Endothelial cell of umbilical vein (primary cell): ENCODE measurements at regions of chr2 and their contacts with region 1.

Region 1: DNA sequence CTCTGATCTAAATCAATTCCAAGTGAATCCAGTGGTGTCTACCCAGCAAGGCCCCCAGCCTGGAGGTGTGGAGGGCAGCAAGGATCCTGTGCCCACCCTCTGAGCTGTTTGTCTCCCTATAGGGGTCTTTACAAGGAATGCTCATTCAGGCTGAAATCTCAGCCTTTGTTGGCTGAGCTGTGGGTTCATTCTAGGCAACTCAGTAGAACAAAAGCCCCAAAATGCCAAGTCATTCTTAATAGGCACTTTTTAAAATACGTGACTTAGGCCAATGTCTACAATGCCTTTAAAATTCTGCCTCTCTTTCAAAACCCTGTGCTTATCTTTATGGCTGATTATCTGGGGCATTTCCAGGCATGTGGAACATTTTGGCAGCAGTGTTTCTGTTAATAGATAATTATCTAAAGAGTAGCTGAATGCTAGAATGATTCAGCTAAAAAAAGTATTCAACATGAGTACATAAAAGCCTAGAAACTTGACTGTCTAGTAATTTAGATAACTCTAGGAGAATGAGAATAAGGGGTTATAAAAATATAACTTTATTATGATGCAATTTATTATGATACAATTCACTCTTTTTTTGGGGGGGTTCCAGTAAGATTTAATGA is 7.4 kb downstream of the UGT1A6 start:
- DNase-seq: peak; percentile 94
- H3K4me3 ChIP-seq: no peak overlapping the region
- H3K27ac ChIP-seq: peak overlapping the region; percentile 95
- H3K4me1 ChIP-seq: peaks cover 4% of the 10 kb centered on the region
- H3K27me3 ChIP-seq: no peaks in the 10 kb centered on the region
- CTCF ChIP-seq: no peak
- POLR2A ChIP-seq: no peak

Region 2: GRCh38 chr2:233593201-233593600 is 106.9 kb before region 1 on chr2:
- CTCF ChIA-PET with region 1: no interaction called
- POLR2A ChIA-PET with region 1: no interaction called
- dilution Hi-C with region 1: no loop called
- intact Hi-C with region 1: no loop called
- DNase-seq: no peak
- H3K4me3 ChIP-seq: no peak overlapping the region
- H3K27ac ChIP-seq: no peak overlapping the region
- H3K4me1 ChIP-seq: no peaks in the 10 kb centered on the region
- H3K27me3 ChIP-seq: no peaks in the 10 kb centered on the region
- CTCF ChIP-seq: no peak
- POLR2A ChIP-seq: no peak

Region 3: GRCh38 chr2:233674995-233675394 is 25.1 kb before region 1 on chr2:
- CTCF ChIA-PET with region 1: no interaction called
- POLR2A ChIA-PET with region 1: no interaction called
- dilution Hi-C with region 1: no loop called
- intact Hi-C with region 1: no loop called
- DNase-seq: no peak
- H3K4me3 ChIP-seq: no peak overlapping the region
- H3K27ac ChIP-seq: no peak overlapping the region
- H3K4me1 ChIP-seq: no peaks in the 10 kb centered on the region
- H3K27me3 ChIP-seq: no peaks in the 10 kb centered on the region
- CTCF ChIP-seq: no peak
- POLR2A ChIP-seq: no peak

Region 4: GRCh38 chr2:233689501-233689900 is 10.6 kb before region 1 on chr2:
- CTCF ChIA-PET with region 1: no interaction called
- POLR2A ChIA-PET with region 1: no interaction called
- dilution Hi-C with region 1: no loop called
- intact Hi-C with region 1: loop called (anchors 1 kb)
- DNase-seq: peak; percentile 97
- H3K4me3 ChIP-seq: no peak overlapping the region
- H3K27ac ChIP-seq: peak overlapping the region; percentile 68
- H3K4me1 ChIP-seq: peaks cover 17% of the 10 kb centered on the region
- H3K27me3 ChIP-seq: no peaks in the 10 kb centered on the region
- CTCF ChIP-seq: no peak
- POLR2A ChIP-seq: peak; percentile 29

Region 5: DNA sequence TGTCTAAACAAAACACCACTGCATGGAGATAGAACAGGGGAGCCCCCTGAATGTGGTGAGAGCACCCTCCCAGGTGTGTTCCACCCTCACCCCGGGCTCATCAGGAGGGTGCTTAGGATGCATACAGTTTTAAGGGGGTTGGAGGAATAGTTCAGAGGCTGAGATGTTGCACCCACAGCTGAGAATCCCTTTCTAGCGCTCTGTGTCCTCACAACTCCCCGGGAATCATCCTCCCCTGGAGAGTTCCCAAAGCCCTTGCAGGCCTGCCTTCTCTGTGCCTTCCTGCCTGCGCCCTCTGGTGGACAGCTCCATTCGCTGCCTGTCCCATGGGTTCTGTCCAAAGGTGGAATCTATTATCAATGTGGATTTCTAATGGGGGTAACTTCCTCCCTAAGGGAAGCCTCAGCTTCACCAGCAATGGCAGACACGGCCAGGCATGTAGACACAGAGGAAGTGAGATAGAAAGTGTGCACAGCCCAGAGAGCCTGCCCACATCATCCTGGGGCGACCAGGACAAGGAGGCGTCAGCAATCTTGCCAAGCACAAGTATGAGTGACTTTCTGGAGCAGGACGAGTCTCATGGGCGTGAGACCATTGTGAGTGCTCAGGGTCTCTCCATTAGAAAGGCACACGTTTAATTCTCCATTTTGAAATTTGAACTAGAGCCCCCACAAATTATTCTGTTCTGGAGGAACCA is 11.3 kb after region 1 on chr2:
- CTCF ChIA-PET with region 1: interaction called, 14 read pairs
- POLR2A ChIA-PET with region 1: no interaction called
- dilution Hi-C with region 1: no loop called
- intact Hi-C with region 1: no loop called
- DNase-seq: peak; percentile 66
- H3K4me3 ChIP-seq: no peak overlapping the region
- H3K27ac ChIP-seq: no peak overlapping the region
- H3K4me1 ChIP-seq: peaks cover 2% of the 10 kb centered on the region
- H3K27me3 ChIP-seq: peaks cover 0 to 2% of the 10 kb centered on the region in 2 experiments
- CTCF ChIP-seq: peak; percentile 89 to 90
- POLR2A ChIP-seq: no peak

Region 6: DNA sequence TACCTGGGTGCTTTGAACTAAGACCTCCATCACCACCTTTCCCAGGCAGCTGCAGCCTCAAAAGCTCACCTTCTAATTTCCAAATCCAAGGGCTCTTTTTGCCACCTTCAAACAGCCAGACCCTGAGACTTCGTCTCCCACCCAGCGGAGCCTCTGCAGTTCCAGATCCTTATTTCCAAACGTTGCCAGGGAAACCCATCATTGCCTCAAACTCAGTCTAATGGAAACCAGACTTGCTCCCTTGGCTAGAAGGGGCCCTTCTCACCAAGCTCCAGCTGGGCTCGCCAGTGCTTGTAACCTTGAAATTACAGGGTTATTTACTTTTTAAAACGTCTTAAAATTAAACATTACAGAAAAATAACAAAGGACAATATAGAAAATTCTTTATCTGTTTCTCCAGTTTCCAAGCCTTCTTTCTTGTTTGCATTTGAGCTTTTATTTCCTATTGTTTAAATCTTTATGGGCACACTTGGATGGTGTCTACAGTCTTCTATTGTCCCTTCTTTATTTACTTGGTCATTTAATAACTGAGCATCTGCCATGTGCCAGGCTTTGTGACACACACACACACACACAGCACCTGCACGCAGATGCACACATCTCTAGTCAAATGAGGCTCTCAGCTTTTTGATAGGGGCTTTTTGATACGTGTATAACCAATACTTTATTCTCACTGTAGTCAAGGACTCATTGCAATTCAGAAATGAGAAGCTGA is 253.1 kb after region 1 on chr2:
- CTCF ChIA-PET with region 1: no interaction called
- POLR2A ChIA-PET with region 1: no interaction called
- dilution Hi-C with region 1: no loop called
- intact Hi-C with region 1: no loop called
- DNase-seq: no peak
- H3K4me3 ChIP-seq: no peak overlapping the region
- H3K27ac ChIP-seq: no peak overlapping the region
- H3K4me1 ChIP-seq: no peaks in the 10 kb centered on the region
- H3K27me3 ChIP-seq: no peaks in the 10 kb centered on the region
- CTCF ChIP-seq: no peak
- POLR2A ChIP-seq: no peak